Head of caudate nucleus (tissue), 42 donors: ENCODE measurements at regions of chr7 and their contacts with region 1.

Region 1: GRCh38 chr7:6435486-6436384 is 12.0 kb downstream of the DAGLB start:
- DNase-seq: peak; percentile 69 to 92 (median 85)

Region 2: DNA sequence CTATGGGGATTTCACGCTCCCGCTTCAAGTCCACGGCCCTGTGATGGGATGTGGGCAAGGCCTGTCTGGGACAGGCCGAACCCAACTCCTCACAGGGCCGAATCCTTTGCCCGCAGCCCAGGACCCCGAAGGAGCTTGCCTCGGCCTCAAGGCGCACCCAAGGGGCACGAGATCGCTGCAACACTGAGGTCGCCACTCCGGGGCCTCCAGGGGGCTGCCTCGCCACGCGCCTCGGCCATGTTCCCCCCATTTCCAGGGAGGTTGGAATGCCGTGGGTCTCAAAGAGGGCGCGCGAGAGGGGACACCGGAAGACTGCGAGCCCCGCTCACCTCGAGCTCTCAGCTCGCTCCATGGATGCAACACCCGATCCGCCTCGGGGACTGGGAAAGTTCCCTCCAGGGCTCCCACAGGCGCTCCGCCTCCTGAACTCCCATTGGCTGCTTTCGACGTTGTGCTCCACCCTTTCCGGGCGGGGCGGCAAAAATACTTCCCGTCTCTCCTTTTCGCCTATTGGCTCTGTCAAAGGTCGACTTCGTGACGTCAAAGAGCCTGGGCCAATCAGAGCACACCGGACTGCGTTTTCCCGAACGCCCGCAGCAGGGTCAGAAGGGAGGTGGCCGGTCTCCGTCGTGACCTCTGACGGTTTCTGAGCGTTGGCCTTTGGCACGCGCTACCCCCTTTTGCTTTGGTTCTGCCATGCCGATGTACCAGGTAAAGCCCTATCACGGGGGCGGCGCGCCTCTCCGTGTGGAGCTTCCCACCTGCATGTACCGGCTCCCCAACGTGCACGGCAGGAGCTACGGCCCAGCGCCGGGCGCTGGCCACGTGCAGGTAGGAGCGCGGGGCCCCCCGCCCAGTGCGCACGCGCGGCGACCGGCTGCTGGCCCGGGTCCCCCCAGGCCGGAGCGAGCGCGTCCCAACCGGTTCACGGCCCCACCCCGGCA is 426.8 kb before region 1 on chr7 and contains the starts of genes AIMP2 and PMS2:
- intact Hi-C with region 1: no loop called
- DNase-seq: peak; percentile 97 to 100 (median 99)

Region 3: DNA sequence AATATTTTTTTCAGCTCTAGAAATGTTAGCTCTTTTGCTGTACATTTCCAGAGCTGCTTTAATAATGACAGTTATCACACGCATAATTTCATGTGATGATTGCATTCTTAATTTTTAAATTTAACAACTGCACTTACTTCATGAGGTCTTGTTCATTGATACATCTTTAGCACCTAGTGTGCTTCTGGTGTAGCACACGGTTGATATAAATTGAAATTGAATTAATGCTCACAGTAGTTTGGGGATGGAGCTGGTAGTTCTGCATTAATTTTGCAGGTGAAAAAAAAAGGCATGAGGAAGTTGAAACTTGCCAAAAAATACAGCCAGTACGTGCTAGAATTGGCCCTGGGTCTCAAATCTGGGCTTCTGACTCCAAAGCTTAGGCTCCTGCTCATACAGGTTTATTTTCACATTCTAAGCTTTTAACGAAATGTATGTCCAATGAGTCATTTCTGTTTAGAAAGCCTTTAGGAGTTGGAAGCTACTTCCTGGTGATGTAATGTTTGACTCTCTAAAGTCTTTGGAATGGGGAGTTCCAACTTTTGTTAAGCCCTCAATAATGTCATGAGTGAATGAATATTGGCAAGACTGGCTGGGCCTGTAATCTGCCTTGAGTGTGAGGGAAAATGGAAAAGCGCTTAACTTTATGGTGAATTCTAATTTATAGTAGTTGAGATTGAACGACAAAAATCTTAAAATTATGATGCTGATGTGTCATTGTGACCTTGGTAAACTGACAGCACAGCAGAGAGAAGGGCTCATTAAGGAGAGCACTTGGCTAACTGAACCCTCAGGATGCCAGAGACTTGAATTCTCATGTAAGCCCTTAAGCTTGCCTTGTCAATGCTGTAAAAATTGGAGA is 50.4 kb before region 1 on chr7:
- intact Hi-C with region 1: loop called (anchors 10 kb)
- DNase-seq: no peak